Adrenal gland (tissue), 19 donors: ENCODE measurements at regions of chr1 and their contacts with region 1.

Region 1: DNA sequence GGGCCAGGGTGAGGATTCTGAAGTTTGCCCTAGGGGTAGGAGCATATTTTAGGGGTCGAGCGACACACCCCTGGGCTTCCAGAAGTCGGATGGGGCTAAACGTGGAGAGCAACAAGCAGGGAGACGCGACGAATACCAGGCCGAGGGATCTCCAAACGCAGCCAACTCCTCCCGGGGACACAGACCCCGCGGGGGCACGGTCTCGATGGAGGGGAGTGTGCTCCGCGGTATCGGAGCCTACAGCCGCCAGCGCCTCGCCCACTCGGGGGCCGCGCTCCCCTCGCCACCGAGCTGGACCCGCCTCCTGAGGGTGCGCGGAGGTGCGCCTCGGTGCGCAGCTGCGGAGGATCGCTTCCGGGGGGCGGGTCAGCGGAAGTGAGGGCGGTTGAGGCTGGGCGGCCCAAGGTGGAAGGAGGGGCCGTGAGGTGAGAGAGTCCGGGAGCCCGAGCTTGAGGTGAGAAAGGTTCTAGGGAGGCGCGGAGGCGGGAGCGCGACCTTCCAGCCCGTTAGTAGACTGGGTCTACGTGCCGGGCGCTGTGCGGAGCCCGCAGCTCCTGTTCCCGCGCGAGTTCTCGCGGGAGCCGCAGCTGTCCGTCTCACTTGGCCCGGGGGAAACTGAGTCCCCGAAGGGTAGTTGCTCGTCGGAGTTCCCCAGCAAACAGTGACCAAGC is at the start of gene MTFR1L:
- DNase-seq: peak; percentile 90 to 94 (median 91)
- H3K4me3 ChIP-seq: peak within 1 kb of the TSS; percentile 26 to 99 (median 82)
- H3K27ac ChIP-seq: peak within 1 kb of the TSS; percentile 92 to 98 (median 93)
- H3K4me1 ChIP-seq: peaks cover 29 to 52% of the 10 kb centered on the region in 2 donors
- H3K27me3 ChIP-seq: no peaks in the 10 kb centered on the region
- CTCF ChIP-seq: no peak
- POLR2A ChIP-seq: peak; percentile 17 to 92
- total RNA-seq, gene MTFR1L: 116 to 285 (median 187) TPM

Region 2: GRCh38 chr1:25743826-25744581 is 75.7 kb before region 1 on chr1:
- intact Hi-C with region 1: no loop called
- DNase-seq: peak; percentile 70 to 91 (median 83)
- H3K4me3 ChIP-seq: no peak overlapping the region
- H3K27ac ChIP-seq: peak overlapping the region; percentile 75 to 95 (median 86)
- H3K4me1 ChIP-seq: peaks cover 16 to 25% of the 10 kb centered on the region in 2 donors
- H3K27me3 ChIP-seq: no peaks in the 10 kb centered on the region
- CTCF ChIP-seq: peak; percentile 17 to 65 (median 55)
- POLR2A ChIP-seq: no peak

Region 3: DNA sequence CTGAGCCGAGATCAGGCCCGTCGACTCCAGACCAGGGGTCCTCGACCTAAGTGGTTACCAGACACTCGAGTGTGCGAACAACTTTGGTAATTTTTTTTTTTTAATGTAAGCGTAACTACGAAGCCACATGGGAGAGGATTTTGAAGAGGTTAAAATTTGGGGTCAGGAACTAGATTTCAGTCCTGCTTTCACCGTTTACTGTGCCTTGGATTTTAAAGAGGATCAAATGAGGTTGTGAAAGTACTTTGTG is 40.0 kb after region 1 on chr1:
- intact Hi-C with region 1: loop called in 1 of 2 experiments (anchors 5 kb)
- DNase-seq: no peak
- H3K4me3 ChIP-seq: peak overlapping the region in 3 of 4 donors; percentile 1 to 56 (median 38)
- H3K27ac ChIP-seq: peak overlapping the region; percentile 66 to 86 (median 84)
- H3K4me1 ChIP-seq: peaks cover 6 to 26% of the 10 kb centered on the region in 2 donors
- H3K27me3 ChIP-seq: no peaks in the 10 kb centered on the region
- CTCF ChIP-seq: no peak
- POLR2A ChIP-seq: no peak

Region 4: GRCh38 chr1:25874934-25875855 is 55.5 kb after region 1 on chr1 and contains the start of gene PAQR7:
- intact Hi-C with region 1: loop called in 1 of 2 experiments (anchors 5 kb)
- DNase-seq: peak; percentile 79 to 87 (median 86)
- H3K4me3 ChIP-seq: peak within 1 kb of the TSS in 3 of 4 donors; percentile 40 to 91 (median 65)
- H3K27ac ChIP-seq: peak within 1 kb of the TSS; percentile 25 to 93 (median 80)
- H3K4me1 ChIP-seq: peaks cover 61 to 65% of the 10 kb centered on the region in 2 donors
- H3K27me3 ChIP-seq: no peaks in the 10 kb centered on the region
- CTCF ChIP-seq: no peak
- POLR2A ChIP-seq: peak in 1 of 2 donors; percentile 78
- total RNA-seq, gene PAQR7: 30.2 to 71.8 (median 35.6) TPM

Region 5: DNA sequence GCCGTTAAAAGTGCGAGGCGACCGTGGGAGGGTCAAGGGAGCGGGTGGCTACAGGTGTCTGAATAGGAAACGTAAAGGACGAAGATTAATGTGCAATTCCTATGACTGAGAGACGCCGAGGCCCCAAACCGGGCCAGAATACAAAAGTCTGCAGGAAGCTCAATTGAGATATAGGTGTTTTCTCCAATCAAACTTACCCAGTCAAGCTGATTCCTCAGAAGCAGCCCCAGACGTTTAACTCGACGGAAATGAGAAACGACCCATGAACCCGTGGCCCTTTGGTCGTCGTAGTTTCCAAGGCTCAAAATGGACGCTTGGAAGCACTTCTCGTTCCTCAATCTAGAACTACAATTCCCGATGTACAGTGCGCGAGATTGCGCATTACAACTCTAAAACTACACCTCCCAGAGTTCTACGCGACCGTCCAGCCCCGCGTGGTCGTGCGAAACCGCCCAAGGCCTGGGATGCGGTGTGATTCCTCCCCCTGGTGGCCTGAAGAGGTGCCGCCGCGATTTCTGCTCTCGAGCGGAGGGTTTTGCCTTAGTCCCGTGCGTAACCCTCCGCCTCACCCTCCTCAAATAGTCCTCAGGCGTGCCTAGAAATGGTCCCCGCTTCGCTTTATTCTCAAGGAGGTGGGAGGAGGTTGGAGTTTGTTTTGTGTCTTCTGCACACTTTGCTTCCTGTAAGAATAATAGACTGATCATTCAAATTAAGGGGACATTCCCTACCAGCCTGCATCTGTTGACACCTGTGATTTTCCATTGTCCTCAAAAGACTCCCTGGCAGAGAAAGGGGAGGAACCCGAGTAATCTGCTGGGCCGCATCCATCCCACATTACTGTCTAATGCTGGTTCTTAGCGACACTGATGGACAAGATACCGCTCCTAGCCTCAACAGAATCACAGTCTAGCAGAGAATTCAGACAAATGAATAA is 178.4 kb after region 1 on chr1 and contains the start of gene PAFAH2:
- intact Hi-C with region 1: loop called in 1 of 2 experiments (anchors 10 kb)
- DNase-seq: peak; percentile 96 to 99 (median 98)
- H3K4me3 ChIP-seq: peak within 1 kb of the TSS in 3 of 4 donors; percentile 2 to 69 (median 32)
- H3K27ac ChIP-seq: peak within 1 kb of the TSS; percentile 80 to 94 (median 90)
- H3K4me1 ChIP-seq: peaks cover 11 to 19% of the 10 kb centered on the region in 2 donors
- H3K27me3 ChIP-seq: no peaks in the 10 kb centered on the region
- CTCF ChIP-seq: peak; percentile 87 to 100 (median 100)
- POLR2A ChIP-seq: peak in 1 of 2 donors; percentile 63
- total RNA-seq, gene PAFAH2: 6.6 to 32.8 (median 14.9) TPM